Right ventricle myocardium superior (tissue), 1 donor: ENCODE measurements at regions of chr11 and their contacts with region 1.

Region 1: GRCh38 chr11:114036156-114036811 is 23.2 kb upstream of the ZBTB16 start:
- DNase-seq: peak; percentile 92
- ATAC-seq: peak; percentile 95

Region 2: DNA sequence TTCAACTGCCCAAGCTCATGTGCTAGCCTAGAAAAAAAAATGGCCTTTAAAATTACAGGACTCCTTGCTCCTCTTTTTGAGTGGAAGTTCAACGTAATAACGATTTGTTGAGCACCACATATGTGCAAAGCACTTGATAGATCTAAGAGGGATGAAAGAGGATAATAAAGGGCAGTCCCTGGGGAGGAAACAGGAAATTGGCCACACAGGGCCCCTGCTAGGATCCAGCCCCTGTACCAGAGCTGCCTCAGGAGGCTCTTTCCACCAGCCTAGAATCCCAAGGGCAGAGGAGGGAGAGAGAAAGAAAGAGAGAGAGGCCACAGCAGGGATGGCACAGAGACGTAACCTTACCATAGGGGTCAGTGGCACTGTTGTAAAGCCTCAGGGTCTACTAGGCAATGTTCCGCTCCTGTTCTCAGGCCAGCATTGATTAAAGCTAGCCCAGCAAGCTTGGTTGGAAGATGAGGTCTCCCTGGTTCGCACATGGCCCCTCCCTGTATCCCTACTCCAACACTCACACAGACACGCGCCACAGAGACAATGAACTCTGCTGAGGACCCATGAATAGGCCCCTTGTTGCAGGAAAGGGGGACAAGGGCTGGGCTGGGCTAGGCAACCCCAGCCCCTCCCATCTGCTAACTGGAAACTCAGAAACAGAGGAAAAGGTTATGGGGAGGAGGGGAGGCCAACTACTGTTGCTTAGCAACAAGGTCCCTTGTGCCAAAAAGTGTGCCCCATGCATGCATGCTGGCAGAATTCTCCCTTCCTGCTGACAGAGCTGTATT is 330.2 kb before region 1 on chr11 and contains the start of gene TMPRSS5:
- intact Hi-C with region 1: no loop called
- DNase-seq: no peak
- ATAC-seq: no peak
- total RNA-seq, gene TMPRSS5: 1.3 TPM

Region 3: DNA sequence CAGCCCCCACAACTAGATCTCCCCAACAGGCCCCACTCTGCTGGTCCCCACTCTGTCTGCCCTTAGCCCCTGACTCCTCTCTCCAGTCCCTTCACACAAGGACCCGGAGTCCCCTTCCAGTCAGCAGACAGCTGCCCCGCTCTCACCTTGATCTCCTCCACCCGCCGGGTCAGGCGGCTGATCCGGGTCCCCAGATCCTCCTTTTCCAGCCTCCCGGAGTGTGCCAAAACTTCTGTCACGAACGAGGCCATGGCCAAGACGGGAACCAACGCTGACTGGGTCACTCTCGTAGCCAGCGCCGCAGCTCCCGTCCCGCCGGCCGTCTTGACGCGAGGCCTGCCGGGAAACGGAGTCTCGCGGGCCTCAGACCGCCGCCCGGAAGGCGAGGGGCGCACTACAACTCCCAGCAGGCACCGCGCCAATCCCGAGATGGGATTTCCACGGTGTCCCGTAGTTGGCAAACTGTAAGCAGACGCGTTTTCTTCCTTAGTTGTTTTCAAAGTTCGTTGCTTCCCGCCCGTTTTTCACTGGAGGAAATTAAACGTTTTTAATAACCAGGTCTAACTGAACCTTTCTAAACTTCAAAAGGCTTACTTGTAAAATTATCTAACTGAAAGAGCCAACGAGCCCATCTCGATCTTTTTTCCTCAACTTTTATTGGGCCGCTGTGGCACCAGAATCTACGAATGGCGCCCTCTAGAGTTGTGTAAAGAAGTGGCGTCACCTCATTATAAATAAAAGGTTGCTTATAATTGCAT is 262.7 kb before region 1 on chr11 and contains the start of gene ZW10:
- intact Hi-C with region 1: no loop called
- DNase-seq: peak; percentile 99
- ATAC-seq: peak; percentile 97
- total RNA-seq, gene ZW10: 8.4 TPM

Region 4: GRCh38 chr11:113896156-113896879 is 140.0 kb before region 1 on chr11:
- intact Hi-C with region 1: loop called (anchors 10 kb)
- DNase-seq: peak; percentile 53
- ATAC-seq: peak; percentile 84